CD8-positive, alpha-beta T cell (primary cell): ENCODE measurements at regions of chr1 and their contacts with region 1.

Region 1: DNA sequence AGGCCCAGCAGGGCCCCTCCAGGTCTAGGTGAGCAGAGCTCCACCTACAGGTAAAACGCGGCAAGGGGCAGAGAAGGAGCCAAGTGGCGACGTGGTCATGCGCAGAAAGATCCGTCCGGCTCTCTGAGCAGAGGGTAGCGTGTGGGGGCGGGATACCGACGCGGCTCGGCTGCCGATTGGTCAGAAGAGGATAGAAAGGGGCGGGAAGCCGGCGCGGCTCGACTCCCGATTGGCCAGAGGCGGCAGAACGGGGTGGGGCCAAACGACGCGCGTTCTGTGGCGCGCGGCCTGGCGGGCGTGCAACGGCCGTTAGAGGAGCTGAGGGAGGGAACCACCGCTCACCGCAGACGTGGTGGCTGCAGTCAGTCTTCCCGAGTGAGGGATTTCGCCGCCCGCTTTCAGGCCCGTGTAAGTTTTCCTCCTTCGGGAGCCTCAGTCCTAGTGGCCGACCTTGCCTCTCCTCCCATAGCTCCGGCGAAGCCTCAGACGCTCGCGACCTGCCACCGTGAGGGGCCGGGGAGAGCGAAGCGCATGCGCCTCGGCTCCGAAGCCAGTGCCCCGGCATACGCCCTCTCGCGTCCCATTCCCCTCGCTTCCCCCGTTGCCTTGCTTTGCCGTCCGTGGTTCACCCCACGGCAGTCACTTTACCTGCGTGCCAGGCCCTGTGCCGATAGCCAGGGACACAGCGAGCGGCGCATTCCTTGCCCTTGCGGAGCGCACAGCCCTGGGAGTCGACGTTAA is at the start of gene CEP85:
- DNase-seq: peak; percentile 96 to 99 (median 99)
- ATAC-seq: peak; percentile 90
- H3K4me3 ChIP-seq: peak within 1 kb of the TSS; percentile 87 to 95
- H3K4me3 Mint-ChIP-seq: peak within 1 kb of the TSS; percentile 99
- H3K27ac ChIP-seq: peak within 1 kb of the TSS; percentile 81 to 85
- H3K27ac Mint-ChIP-seq: peak within 1 kb of the TSS; percentile 95
- H3K4me1 ChIP-seq: peaks cover 17% of the 10 kb centered on the region
- H3K4me1 Mint-ChIP-seq: peaks cover 36% of the 10 kb centered on the region
- H3K27me3 ChIP-seq: no peaks in the 10 kb centered on the region
- H3K27me3 Mint-ChIP-seq: no peaks in the 10 kb centered on the region
- CTCF ChIP-seq: peak; percentile 72
- total RNA-seq, gene CEP85: 7.1 TPM

Region 2: GRCh38 chr1:25037174-25038074 is 1196.6 kb before region 1 on chr1:
- CTCF ChIA-PET with region 1: no interaction called
- POLR2A ChIA-PET with region 1: no interaction called
- intact Hi-C with region 1: no loop called
- DNase-seq: peak in 8 of 9 experiments; percentile 59 to 80 (median 70)
- ATAC-seq: peak; percentile 47
- H3K4me3 ChIP-seq: no peak overlapping the region
- H3K4me3 Mint-ChIP-seq: peak overlapping the region; percentile 5
- H3K27ac ChIP-seq: no peak overlapping the region
- H3K27ac Mint-ChIP-seq: no peak overlapping the region
- H3K4me1 ChIP-seq: peaks cover 65% of the 10 kb centered on the region
- H3K4me1 Mint-ChIP-seq: peaks cover 52% of the 10 kb centered on the region
- H3K27me3 ChIP-seq: no peaks in the 10 kb centered on the region
- H3K27me3 Mint-ChIP-seq: no peaks in the 10 kb centered on the region
- CTCF ChIP-seq: peak; percentile 72

Region 3: GRCh38 chr1:25616095-25616986 is 617.7 kb before region 1 on chr1 and contains the start of gene MAN1C1:
- CTCF ChIA-PET with region 1: no interaction called
- POLR2A ChIA-PET with region 1: no interaction called
- intact Hi-C with region 1: no loop called
- DNase-seq: peak; percentile 70 to 93 (median 81)
- ATAC-seq: peak; percentile 76
- H3K4me3 ChIP-seq: peak within 1 kb of the TSS; percentile 64 to 74
- H3K4me3 Mint-ChIP-seq: peak within 1 kb of the TSS; percentile 83
- H3K27ac ChIP-seq: peak within 1 kb of the TSS; percentile 58 to 74
- H3K27ac Mint-ChIP-seq: peak within 1 kb of the TSS; percentile 49
- H3K4me1 ChIP-seq: peaks cover 48% of the 10 kb centered on the region
- H3K4me1 Mint-ChIP-seq: peaks cover 52% of the 10 kb centered on the region
- H3K27me3 ChIP-seq: no peaks in the 10 kb centered on the region
- H3K27me3 Mint-ChIP-seq: no peaks in the 10 kb centered on the region
- CTCF ChIP-seq: no peak
- total RNA-seq, gene MAN1C1: 24.6 to 25.7 TPM

Region 4: GRCh38 chr1:25905680-25906643 is 328.1 kb before region 1 on chr1 and contains the start of gene STMN1:
- CTCF ChIA-PET with region 1: no interaction called
- POLR2A ChIA-PET with region 1: no interaction called
- intact Hi-C with region 1: loop called in 1 of 2 experiments (anchors 5 kb)
- DNase-seq: peak; percentile 77 to 93 (median 88)
- ATAC-seq: peak; percentile 72
- H3K4me3 ChIP-seq: peak within 1 kb of the TSS; percentile 63 to 68
- H3K4me3 Mint-ChIP-seq: peak within 1 kb of the TSS; percentile 95
- H3K27ac ChIP-seq: peak within 1 kb of the TSS; percentile 70 to 71
- H3K27ac Mint-ChIP-seq: peak within 1 kb of the TSS; percentile 95
- H3K4me1 ChIP-seq: peaks cover 8% of the 10 kb centered on the region
- H3K4me1 Mint-ChIP-seq: peaks cover 18% of the 10 kb centered on the region
- H3K27me3 ChIP-seq: no peaks in the 10 kb centered on the region
- H3K27me3 Mint-ChIP-seq: no peaks in the 10 kb centered on the region
- CTCF ChIP-seq: no peak
- total RNA-seq, gene STMN1: 18.5 to 19.6 TPM

Region 5: GRCh38 chr1:26111530-26112406 is 122.3 kb before region 1 on chr1 and contains the start of gene PDIK1L:
- CTCF ChIA-PET with region 1: interaction called, 7 read pairs
- POLR2A ChIA-PET with region 1: interaction called, 3 read pairs
- intact Hi-C with region 1: loop called (anchors 1 kb)
- DNase-seq: peak; percentile 92 to 98 (median 94)
- ATAC-seq: peak; percentile 87
- H3K4me3 ChIP-seq: peak within 1 kb of the TSS; percentile 98 to 99
- H3K4me3 Mint-ChIP-seq: peak within 1 kb of the TSS; percentile 92
- H3K27ac ChIP-seq: peak within 1 kb of the TSS; percentile 65 to 79
- H3K27ac Mint-ChIP-seq: peak within 1 kb of the TSS; percentile 91
- H3K4me1 ChIP-seq: peaks cover 19% of the 10 kb centered on the region
- H3K4me1 Mint-ChIP-seq: peaks cover 30% of the 10 kb centered on the region
- H3K27me3 ChIP-seq: no peaks in the 10 kb centered on the region
- H3K27me3 Mint-ChIP-seq: no peaks in the 10 kb centered on the region
- CTCF ChIP-seq: no peak
- total RNA-seq, gene PDIK1L: 10.2 to 10.8 TPM

Region 6: DNA sequence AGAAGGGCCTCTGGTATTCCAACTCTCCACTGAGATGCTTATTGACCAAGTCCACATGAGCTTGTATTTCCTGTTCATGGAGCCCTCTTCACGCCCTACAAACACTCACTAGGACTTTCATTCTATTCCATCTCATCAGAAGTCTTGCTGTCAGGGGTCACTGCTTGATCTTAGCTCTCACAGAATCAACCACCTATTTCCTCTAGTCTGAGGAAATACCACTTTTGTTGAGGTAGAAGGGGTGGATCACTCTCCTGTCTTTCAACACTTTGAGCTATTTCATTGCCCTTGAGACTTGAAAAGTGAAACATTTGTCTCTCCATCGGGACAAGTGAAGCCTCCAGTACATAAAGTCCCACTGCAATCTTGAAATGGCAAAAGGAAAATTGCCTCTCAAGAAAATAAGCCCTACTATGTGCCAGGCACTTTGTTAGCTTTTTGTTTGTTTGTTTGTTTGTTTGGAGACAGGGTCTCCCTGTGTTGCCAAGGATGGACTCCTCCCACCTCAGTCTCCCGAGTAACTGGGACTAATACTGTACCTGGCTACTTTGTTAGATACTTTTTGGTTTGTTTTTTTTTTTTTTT is 95.0 kb before region 1 on chr1:
- CTCF ChIA-PET with region 1: no interaction called
- POLR2A ChIA-PET with region 1: no interaction called
- intact Hi-C with region 1: no loop called
- DNase-seq: peak in 2 of 9 experiments; percentile 36 to 44
- ATAC-seq: peak; percentile 64
- H3K4me3 ChIP-seq: no peak overlapping the region
- H3K4me3 Mint-ChIP-seq: peak overlapping the region; percentile 26
- H3K27ac ChIP-seq: no peak overlapping the region
- H3K27ac Mint-ChIP-seq: peak overlapping the region; percentile 46
- H3K4me1 ChIP-seq: peaks cover 13% of the 10 kb centered on the region
- H3K4me1 Mint-ChIP-seq: peaks cover 13% of the 10 kb centered on the region
- H3K27me3 ChIP-seq: no peaks in the 10 kb centered on the region
- H3K27me3 Mint-ChIP-seq: no peaks in the 10 kb centered on the region
- CTCF ChIP-seq: no peak

Region 7: DNA sequence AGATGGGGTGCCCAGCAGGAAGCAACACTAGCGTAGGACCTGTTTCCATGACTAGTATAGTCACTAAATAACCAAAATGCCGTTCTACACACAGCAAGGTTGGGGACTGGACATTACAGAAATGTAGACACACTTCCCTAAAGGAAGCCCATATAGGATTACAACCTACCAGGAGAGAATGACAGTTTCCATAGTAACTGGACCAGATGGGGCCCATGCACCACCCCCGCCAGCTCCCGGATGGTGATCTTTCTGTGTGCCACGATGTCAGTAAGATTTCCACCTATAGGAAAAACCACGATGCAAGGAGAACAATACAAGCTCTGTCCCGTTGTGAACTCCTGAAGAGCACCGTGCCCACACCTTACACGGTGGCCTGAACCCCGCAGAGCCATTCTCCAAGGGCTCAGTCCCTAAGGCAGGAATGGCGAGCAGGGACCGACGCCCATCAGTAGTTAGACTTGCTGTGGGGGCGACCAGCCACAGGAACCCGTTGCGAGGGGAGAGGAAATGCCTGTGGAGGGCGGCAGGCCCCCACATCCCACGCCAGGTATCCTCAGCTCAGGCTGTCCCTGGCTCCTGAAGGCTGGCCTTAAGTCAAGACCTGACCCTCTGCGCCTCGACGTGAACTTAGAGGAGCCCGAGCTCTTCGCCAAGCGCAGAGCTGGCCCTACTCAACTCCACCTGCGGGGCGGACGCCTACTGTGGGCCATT is 13.7 kb before region 1 on chr1:
- CTCF ChIA-PET with region 1: interaction called, 17 read pairs
- POLR2A ChIA-PET with region 1: interaction called, 5 read pairs
- intact Hi-C with region 1: no loop called
- DNase-seq: no peak
- ATAC-seq: no peak
- H3K4me3 ChIP-seq: no peak overlapping the region
- H3K4me3 Mint-ChIP-seq: no peak overlapping the region
- H3K27ac ChIP-seq: no peak overlapping the region
- H3K27ac Mint-ChIP-seq: no peak overlapping the region
- H3K4me1 ChIP-seq: no peaks in the 10 kb centered on the region
- H3K4me1 Mint-ChIP-seq: peaks cover 4% of the 10 kb centered on the region
- H3K27me3 ChIP-seq: no peaks in the 10 kb centered on the region
- H3K27me3 Mint-ChIP-seq: peaks cover 8% of the 10 kb centered on the region
- CTCF ChIP-seq: no peak

Region 8: GRCh38 chr1:26306290-26307229 is 72.5 kb after region 1 on chr1 and contains the start of gene UBXN11:
- CTCF ChIA-PET with region 1: interaction called, 5 read pairs
- POLR2A ChIA-PET with region 1: no interaction called
- intact Hi-C with region 1: loop called in 1 of 2 experiments (anchors 1 kb)
- DNase-seq: peak; percentile 82 to 97 (median 92)
- ATAC-seq: peak; percentile 99
- H3K4me3 ChIP-seq: peak within 1 kb of the TSS; percentile 84 to 91
- H3K4me3 Mint-ChIP-seq: peak within 1 kb of the TSS; percentile 99
- H3K27ac ChIP-seq: peak within 1 kb of the TSS; percentile 73 to 83
- H3K27ac Mint-ChIP-seq: peak within 1 kb of the TSS; percentile 95
- H3K4me1 ChIP-seq: peaks cover 30% of the 10 kb centered on the region
- H3K4me1 Mint-ChIP-seq: peaks cover 31% of the 10 kb centered on the region
- H3K27me3 ChIP-seq: no peaks in the 10 kb centered on the region
- H3K27me3 Mint-ChIP-seq: no peaks in the 10 kb centered on the region
- CTCF ChIP-seq: no peak
- total RNA-seq, gene UBXN11: 28.6 to 33.8 TPM

Region 9: GRCh38 chr1:26431979-26432695 is 198.1 kb after region 1 on chr1 and contains the start of gene DHDDS:
- CTCF ChIA-PET with region 1: no interaction called
- POLR2A ChIA-PET with region 1: interaction called, 4 read pairs
- intact Hi-C with region 1: loop called in 1 of 2 experiments (anchors 5 kb)
- DNase-seq: peak; percentile 96 to 99 (median 99)
- ATAC-seq: peak; percentile 96
- H3K4me3 ChIP-seq: peak within 1 kb of the TSS; percentile 72 to 78
- H3K4me3 Mint-ChIP-seq: peak within 1 kb of the TSS; percentile 95
- H3K27ac ChIP-seq: peak within 1 kb of the TSS; percentile 73 to 81
- H3K27ac Mint-ChIP-seq: peak within 1 kb of the TSS; percentile 96
- H3K4me1 ChIP-seq: peaks cover 20% of the 10 kb centered on the region
- H3K4me1 Mint-ChIP-seq: peaks cover 21% of the 10 kb centered on the region
- H3K27me3 ChIP-seq: no peaks in the 10 kb centered on the region
- H3K27me3 Mint-ChIP-seq: no peaks in the 10 kb centered on the region
- CTCF ChIP-seq: no peak
- total RNA-seq, gene DHDDS: 23.9 to 29.2 TPM